Heart right ventricle (tissue), 16 donors: ENCODE measurements at regions of chr9 and their contacts with region 1.

Region 1: DNA sequence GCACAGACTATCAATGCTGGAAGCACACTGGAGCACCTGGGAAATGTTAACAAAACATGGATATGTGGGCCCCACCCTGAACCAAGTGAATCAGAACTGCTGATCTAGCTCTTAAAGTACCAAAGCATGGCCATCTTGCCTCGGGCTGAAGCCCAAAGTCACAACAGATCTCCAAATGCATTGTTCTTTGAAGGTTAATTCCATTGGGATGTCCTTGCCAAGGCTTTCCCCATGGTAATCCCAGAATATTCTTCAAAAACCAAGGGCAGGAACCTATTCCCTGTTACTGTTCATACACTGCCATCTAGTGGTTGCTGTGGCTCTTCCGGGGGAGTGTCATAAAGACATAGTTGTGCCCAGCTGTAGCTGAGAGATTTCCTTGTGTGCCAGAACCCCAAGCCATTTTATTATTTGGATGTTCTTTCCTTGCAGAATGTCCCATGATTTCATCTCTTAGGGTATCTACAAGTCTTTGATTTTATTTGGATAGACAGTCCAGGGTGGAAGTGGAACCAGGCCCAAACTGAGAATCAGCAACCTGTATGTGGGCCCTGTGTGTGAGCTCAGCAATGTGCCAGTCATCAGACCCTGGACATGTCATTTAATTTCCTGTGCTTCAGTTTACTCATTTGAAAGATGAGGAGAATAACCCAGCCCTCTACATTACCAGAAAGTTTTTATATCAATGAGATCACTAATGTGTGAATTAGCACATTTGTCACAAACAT is 290.0 kb downstream of the ACTL7B start:
- DNase-seq: peak in 1 of 2 donors; percentile 47
- ATAC-seq: peak; percentile 87 to 94 (median 92)
- H3K4me3 ChIP-seq: no peak overlapping the region
- H3K27ac ChIP-seq: no peak overlapping the region
- H3K4me1 ChIP-seq: peaks cover 0 to 5% (median 0%) of the 10 kb centered on the region in 9 donors
- H3K27me3 ChIP-seq: peaks cover 0 to 8% (median 0%) of the 10 kb centered on the region in 7 donors
- CTCF ChIP-seq: peak; percentile 70 to 93 (median 86)

Region 2: GRCh38 chr9:107455425-107456135 is 1110.2 kb before region 1 on chr9:
- intact Hi-C with region 1: loop called in 1 of 10 experiments (anchors 10 kb)
- DNase-seq: no peak
- ATAC-seq: no peak
- H3K4me3 ChIP-seq: no peak overlapping the region
- H3K27ac ChIP-seq: no peak overlapping the region
- H3K4me1 ChIP-seq: no peaks in the 10 kb centered on the region
- H3K27me3 ChIP-seq: no peaks in the 10 kb centered on the region
- CTCF ChIP-seq: no peak

Region 3: GRCh38 chr9:107484117-107484723 is 1081.6 kb before region 1 on chr9:
- intact Hi-C with region 1: loop called in 8 of 10 experiments (anchors 1 to 10 kb)
- DNase-seq: peak in 1 of 2 donors; percentile 55
- ATAC-seq: peak; percentile 22 to 65 (median 52)
- H3K4me3 ChIP-seq: peak overlapping the region in 8 of 10 donors; percentile 60 to 94 (median 80)
- H3K27ac ChIP-seq: peak overlapping the region in 5 of 10 donors; percentile 3 to 98 (median 98)
- H3K4me1 ChIP-seq: peaks cover 0 to 61% (median 6%) of the 10 kb centered on the region in 9 donors
- H3K27me3 ChIP-seq: peaks cover 0 to 27% (median 0%) of the 10 kb centered on the region in 7 donors
- CTCF ChIP-seq: peak; percentile 27 to 78 (median 62)

Region 4: GRCh38 chr9:108282872-108283271 is 282.9 kb before region 1 on chr9:
- intact Hi-C with region 1: loop called in 4 of 10 experiments (anchors 10 kb)
- DNase-seq: no peak
- ATAC-seq: no peak
- H3K4me3 ChIP-seq: no peak overlapping the region
- H3K27ac ChIP-seq: no peak overlapping the region
- H3K4me1 ChIP-seq: no peaks in the 10 kb centered on the region
- H3K27me3 ChIP-seq: no peaks in the 10 kb centered on the region
- CTCF ChIP-seq: peak in 2 of 9 donors; percentile 22 to 37

Region 5: DNA sequence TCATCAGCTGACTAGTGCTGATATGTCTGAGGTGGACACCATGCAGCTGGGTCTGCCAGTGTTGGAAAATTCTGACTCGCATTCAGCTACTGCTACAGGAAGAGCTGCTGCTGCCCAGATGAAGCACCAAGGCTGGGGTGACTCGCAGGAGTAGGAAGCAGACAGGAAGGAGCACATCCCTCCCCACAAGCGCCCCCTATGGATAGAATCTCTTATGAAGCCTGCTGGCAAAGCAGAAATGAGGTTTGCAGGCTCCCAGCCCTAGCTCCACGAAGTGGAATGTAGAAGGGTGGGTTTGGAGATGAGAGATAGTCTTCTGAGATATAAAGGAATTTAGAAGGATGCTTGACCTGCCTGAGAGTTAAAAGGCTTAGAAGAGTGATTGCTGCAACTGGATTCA is 153.1 kb before region 1 on chr9:
- intact Hi-C with region 1: loop called in 1 of 10 experiments (anchors 10 kb)
- DNase-seq: no peak
- ATAC-seq: no peak
- H3K4me3 ChIP-seq: no peak overlapping the region
- H3K27ac ChIP-seq: no peak overlapping the region
- H3K4me1 ChIP-seq: peaks cover 0 to 11% (median 0%) of the 10 kb centered on the region in 9 donors
- H3K27me3 ChIP-seq: no peaks in the 10 kb centered on the region
- CTCF ChIP-seq: peak in 1 of 9 donors; percentile 7

Region 6: GRCh38 chr9:108761655-108762347 is 196.0 kb after region 1 on chr9:
- intact Hi-C with region 1: loop called in 4 of 10 experiments (anchors 5 to 10 kb)
- DNase-seq: peak; percentile 29 to 58
- ATAC-seq: peak in 7 of 8 donors; percentile 47 to 84 (median 80)
- H3K4me3 ChIP-seq: no peak overlapping the region
- H3K27ac ChIP-seq: no peak overlapping the region
- H3K4me1 ChIP-seq: peaks cover 0 to 6% (median 3%) of the 10 kb centered on the region in 9 donors
- H3K27me3 ChIP-seq: peaks cover 0 to 3% (median 0%) of the 10 kb centered on the region in 7 donors
- CTCF ChIP-seq: peak; percentile 78 to 93 (median 89)

Region 7: DNA sequence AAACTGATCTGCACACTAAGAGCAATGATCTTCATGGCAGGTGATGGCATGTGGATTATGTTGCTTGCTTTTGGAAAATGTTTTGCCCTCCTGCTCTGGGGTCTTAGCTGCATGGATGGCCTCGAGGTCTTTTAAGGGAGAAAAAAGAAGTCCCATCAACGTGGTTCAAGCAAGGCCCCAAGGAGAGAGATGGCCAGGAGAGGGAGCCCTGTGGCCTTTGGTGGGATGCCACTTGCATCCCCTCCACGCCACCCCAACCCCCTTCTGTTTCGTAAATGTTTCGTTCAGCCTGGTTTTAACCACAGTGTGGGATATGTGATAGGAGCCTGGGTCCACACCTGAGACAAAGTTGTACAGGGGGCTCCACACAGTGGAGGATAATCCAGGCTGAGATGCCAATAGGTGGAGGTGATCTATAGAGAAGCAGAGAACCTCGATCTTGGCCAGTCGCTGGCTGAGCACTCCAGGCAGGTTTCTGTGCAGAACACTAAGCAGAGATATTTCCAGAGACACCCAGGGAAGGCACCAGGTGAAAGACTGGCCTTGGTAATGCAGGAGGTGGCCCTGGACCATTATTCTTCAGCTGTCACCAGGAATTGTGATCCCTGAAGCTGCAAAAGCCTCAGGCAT is 627.0 kb after region 1 on chr9:
- intact Hi-C with region 1: no loop called
- DNase-seq: no peak
- ATAC-seq: peak in 4 of 8 donors; percentile 37 to 62 (median 42)
- H3K4me3 ChIP-seq: no peak overlapping the region
- H3K27ac ChIP-seq: no peak overlapping the region
- H3K4me1 ChIP-seq: peaks cover 0 to 3% (median 0%) of the 10 kb centered on the region in 9 donors
- H3K27me3 ChIP-seq: no peaks in the 10 kb centered on the region
- CTCF ChIP-seq: peak in 7 of 9 donors; percentile 27 to 49 (median 42)